ENCODE measurements at regions of chr20 and their contacts with region 1.

Region 1: DNA sequence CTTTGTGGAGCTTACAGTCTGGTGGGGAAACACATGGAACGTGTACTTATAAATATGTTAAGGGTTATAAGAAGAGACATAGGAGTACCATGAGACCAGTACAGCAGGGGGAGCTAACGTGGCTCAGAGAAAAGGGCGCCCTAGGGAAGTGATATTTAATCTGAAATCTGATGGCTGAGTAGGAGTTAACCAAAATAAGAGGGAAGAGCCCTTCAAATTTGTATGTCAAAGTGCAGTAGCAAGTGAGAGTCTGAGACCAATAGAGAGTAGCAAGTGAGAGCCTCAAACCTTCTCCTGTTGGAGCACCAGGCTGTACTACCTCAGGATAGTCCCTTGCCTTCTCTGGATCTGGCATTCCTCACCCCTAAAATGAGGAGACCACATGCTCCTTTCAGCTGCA is 6.1 kb upstream of the PKIG start:
- DNase-seq: no peak
- ATAC-seq: peak; percentile 80
- H3K4me3 Mint-ChIP-seq: peak overlapping the region; percentile 72
- H3K27ac Mint-ChIP-seq: peak overlapping the region; percentile 89
- H3K4me1 Mint-ChIP-seq: peaks cover 44% of the 10 kb centered on the region
- H3K27me3 Mint-ChIP-seq: no peaks in the 10 kb centered on the region
- CTCF ChIP-seq: no peak

Region 2: DNA sequence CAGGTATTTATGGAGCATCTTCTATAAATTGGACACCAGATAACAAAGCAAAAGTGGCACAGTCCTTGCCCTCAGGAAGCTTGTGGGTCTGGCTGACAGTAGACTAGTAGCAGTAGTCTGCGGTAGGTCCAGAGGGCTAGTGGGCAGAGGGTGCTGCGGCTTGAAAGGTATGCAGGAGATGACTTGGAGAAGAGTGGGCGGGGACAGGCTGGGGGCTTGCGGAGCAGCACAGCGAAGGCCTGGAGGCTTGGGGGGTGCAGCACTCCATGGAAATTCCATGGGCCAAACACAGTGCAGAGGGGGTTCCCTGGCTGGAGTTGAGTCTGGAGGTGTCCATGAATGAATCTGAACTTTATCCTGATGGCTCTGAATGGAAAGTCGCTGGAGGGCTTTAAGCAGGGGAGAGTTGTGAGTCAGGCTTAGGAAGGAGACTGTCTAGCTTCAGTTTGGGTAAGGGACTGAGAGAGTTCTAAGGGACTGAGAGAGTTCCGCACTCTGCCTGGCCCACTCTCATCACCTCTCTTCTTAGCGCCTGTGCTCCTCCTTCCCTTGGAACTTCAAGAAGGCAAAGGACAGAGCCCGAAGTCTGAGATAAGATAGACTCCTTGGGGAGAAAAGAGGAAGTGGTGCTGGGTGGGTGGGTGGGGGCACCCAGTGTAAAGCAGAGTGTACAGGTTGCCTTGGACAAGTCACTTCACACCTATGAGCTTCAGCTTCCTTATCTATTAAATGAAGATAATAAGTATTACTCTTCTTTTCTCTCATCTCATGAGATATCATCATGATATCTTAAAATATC is 14.9 kb after region 1 on chr20:
- CTCF ChIA-PET with region 1: interaction called, 46 read pairs
- POLR2A ChIA-PET with region 1: interaction called, 46 read pairs
- intact Hi-C with region 1: loop called (anchors 1 kb)
- DNase-seq: no peak
- ATAC-seq: no peak
- H3K4me3 Mint-ChIP-seq: peak overlapping the region; percentile 52
- H3K27ac Mint-ChIP-seq: peak overlapping the region; percentile 89
- H3K4me1 Mint-ChIP-seq: peaks cover 97% of the 10 kb centered on the region
- H3K27me3 Mint-ChIP-seq: no peaks in the 10 kb centered on the region
- CTCF ChIP-seq: no peak

Region 3: GRCh38 chr20:44615169-44615791 is 39.0 kb after region 1 on chr20:
- CTCF ChIA-PET with region 1: interaction called, 147 read pairs
- POLR2A ChIA-PET with region 1: interaction called, 32 read pairs
- intact Hi-C with region 1: loop called (anchors 1 kb)
- DNase-seq: no peak
- ATAC-seq: peak; percentile 41
- H3K4me3 Mint-ChIP-seq: no peak overlapping the region
- H3K27ac Mint-ChIP-seq: peak overlapping the region; percentile 80
- H3K4me1 Mint-ChIP-seq: peaks cover 69% of the 10 kb centered on the region
- H3K27me3 Mint-ChIP-seq: no peaks in the 10 kb centered on the region
- CTCF ChIP-seq: no peak

Region 4: DNA sequence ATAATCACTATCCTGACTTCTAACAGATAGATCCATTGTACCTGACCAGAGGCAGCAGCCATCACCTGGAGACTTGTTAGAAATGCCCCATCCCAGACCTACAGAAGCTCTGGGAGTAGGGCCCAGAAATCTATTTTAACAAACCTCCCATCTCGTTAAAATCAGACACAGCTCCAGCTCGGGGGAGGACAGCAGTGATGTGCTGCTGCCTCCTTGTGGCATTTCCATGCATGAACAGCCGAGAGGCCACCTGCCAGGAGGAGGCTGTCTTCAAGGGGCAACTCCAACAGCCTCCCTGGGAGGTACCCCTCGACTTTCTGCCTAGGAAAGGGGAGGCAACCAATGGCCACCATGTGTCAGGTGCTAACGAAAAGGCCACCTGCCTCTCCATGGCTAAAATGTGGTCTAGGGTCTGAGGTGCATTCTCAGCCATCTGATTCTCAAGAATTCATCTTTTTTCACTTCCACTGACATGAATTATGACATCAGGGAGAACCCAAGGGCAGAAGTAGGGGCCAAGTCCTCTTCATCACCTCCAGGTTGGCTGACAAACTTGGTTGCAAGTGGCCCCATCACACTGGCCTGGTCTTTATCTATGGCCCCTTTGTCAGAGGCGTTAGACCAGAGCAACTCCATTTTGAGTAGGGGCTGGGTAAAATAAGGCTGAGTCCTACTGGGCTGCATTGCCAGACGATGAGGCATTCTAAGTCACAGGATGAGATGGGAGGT is 157.2 kb after region 1 on chr20:
- CTCF ChIA-PET with region 1: no interaction called
- POLR2A ChIA-PET with region 1: no interaction called
- intact Hi-C with region 1: loop called (anchors 1 kb)
- DNase-seq: peak; percentile 27
- ATAC-seq: peak; percentile 74
- H3K4me3 Mint-ChIP-seq: no peak overlapping the region
- H3K27ac Mint-ChIP-seq: no peak overlapping the region
- H3K4me1 Mint-ChIP-seq: peaks cover 8% of the 10 kb centered on the region
- H3K27me3 Mint-ChIP-seq: no peaks in the 10 kb centered on the region
- CTCF ChIP-seq: no peak